Common myeloid progenitor, CD34-positive (primary cell): ENCODE measurements at regions of chr5 and their contacts with region 1.

Region 1: DNA sequence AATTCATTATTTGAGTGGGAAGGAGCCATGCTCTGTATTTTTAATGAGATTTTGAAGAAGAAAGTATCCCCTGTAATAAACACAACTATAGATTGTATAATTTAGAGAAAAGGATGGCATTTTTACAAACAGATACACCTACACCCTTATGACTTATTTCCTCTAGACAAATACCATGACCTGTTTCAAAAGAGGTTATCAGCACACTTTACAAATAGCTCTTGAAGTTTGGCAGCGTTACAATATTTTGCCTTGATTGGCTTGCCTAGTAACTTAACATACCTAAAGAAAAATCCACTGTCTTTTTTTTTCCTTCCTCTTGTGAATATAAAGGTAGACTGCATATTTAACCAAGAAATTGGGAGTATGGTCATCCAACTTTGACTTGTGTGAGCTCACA is 28.5 kb upstream of the CETN3 start:
- DNase-seq: no peak
- H3K4me3 ChIP-seq: no peak overlapping the region
- H3K27ac ChIP-seq: no peak overlapping the region
- H3K4me1 ChIP-seq: peaks cover 2 to 7% (median 5%) of the 10 kb centered on the region in 4 experiments
- H3K27me3 ChIP-seq: peaks cover 0 to 2% (median 0%) of the 10 kb centered on the region in 5 experiments

Region 2: DNA sequence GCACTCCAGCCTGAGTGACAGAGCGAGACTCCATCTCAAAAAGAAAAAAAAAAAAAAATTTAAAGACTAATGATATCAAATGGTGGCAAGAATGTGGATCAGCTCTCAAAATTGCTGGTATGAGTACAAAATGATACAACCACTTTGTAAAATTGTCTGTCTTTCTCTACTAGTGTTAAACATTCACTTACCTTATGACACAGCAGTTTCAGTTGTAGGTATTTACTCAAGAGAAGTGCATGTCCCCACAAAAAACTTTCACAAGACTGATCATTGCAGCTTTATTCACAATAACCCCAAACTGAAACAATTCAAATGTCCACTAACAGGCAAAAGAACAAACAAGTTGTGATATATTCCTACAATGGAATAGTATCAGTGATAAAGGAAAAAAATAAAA is 13.9 kb before region 1 on chr5:
- CTCF ChIA-PET with region 1: interaction called, 13 read pairs
- POLR2A ChIA-PET with region 1: no interaction called
- DNase-seq: no peak
- H3K4me3 ChIP-seq: no peak overlapping the region
- H3K27ac ChIP-seq: no peak overlapping the region
- H3K4me1 ChIP-seq: no peaks in the 10 kb centered on the region
- H3K27me3 ChIP-seq: no peaks in the 10 kb centered on the region

Region 3: DNA sequence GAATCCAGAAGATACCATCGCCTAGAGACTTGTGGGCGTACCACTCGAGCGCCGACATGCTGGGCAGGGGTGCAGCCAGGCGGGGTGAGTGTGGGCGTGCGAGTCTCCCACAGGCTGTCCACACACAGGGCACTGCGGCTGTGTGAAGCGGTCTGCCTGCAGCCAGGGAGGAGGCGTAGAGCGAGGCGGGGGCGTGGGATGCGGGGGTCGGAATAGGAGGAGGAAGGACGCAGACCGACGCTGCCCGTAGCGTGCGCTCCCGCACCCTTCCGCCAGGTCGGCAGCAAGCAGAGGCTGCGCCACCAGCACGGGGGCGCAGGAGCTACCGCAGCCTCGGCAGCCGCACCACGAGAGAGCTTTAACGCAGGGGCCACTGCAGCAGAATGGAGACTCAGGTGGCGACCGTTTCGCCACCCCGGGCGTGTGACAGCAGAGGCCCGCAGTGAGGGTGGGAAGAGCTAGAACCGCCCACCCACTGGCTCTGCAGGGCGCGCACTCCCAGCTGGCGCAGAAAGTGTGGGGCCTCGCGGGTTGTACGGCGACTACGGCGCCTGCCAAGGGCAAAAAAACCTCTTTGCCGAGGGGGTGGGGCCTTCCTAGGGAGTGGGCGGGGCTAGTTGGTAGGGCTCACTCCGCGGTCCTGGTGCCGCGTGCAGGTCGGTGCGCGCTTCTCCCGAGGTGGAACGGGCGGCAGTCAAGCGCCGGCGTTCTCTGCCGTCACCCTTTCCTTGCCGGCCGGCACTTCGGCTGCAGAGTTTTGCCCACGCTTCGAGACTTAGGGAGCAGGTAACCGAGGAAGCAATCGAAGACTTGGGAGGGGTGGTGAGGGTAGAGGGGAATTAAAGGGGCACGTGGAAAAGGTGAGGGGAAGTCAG is 36.4 kb after region 1 on chr5 and contains the starts of genes MBLAC2 and POLR3G:
- CTCF ChIA-PET with region 1: interaction called, 13 read pairs
- POLR2A ChIA-PET with region 1: interaction called, 6 read pairs
- DNase-seq: peak; percentile 92 to 96 (median 96)
- H3K4me3 ChIP-seq: peak within 1 kb of the TSS; percentile 76 to 94 (median 83)
- H3K27ac ChIP-seq: peak within 1 kb of the TSS in 1 of 2 experiments; percentile 76
- H3K4me1 ChIP-seq: peaks cover 3 to 26% (median 15%) of the 10 kb centered on the region in 4 experiments
- H3K27me3 ChIP-seq: no peaks in the 10 kb centered on the region

Region 4: GRCh38 chr5:90494043-90494442 is 55.9 kb after region 1 on chr5:
- CTCF ChIA-PET with region 1: no interaction called
- POLR2A ChIA-PET with region 1: no interaction called
- DNase-seq: no peak
- H3K4me3 ChIP-seq: no peak overlapping the region
- H3K27ac ChIP-seq: no peak overlapping the region
- H3K4me1 ChIP-seq: no peaks in the 10 kb centered on the region
- H3K27me3 ChIP-seq: no peaks in the 10 kb centered on the region

Region 5: GRCh38 chr5:90602681-90603080 is 164.6 kb after region 1 on chr5:
- CTCF ChIA-PET with region 1: interaction called, 11 read pairs
- POLR2A ChIA-PET with region 1: no interaction called
- DNase-seq: peak in 2 of 3 donors; percentile 16 to 32
- H3K4me3 ChIP-seq: no peak overlapping the region
- H3K27ac ChIP-seq: no peak overlapping the region
- H3K4me1 ChIP-seq: peaks cover 0 to 8% (median 5%) of the 10 kb centered on the region in 4 experiments
- H3K27me3 ChIP-seq: no peaks in the 10 kb centered on the region

Region 6: GRCh38 chr5:90783460-90784333 is 345.6 kb after region 1 on chr5:
- CTCF ChIA-PET with region 1: interaction called, 30 read pairs
- POLR2A ChIA-PET with region 1: no interaction called
- DNase-seq: peak; percentile 55 to 80 (median 73)
- H3K4me3 ChIP-seq: no peak overlapping the region
- H3K27ac ChIP-seq: no peak overlapping the region
- H3K4me1 ChIP-seq: peaks cover 0 to 6% (median 3%) of the 10 kb centered on the region in 4 experiments
- H3K27me3 ChIP-seq: no peaks in the 10 kb centered on the region

Region 7: GRCh38 chr5:91848453-91848852 is 1410.4 kb after region 1 on chr5:
- CTCF ChIA-PET with region 1: no interaction called
- POLR2A ChIA-PET with region 1: no interaction called
- DNase-seq: no peak
- H3K4me3 ChIP-seq: no peak overlapping the region
- H3K27ac ChIP-seq: no peak overlapping the region
- H3K4me1 ChIP-seq: no peaks in the 10 kb centered on the region
- H3K27me3 ChIP-seq: no peaks in the 10 kb centered on the region